ENCODE measurements at regions of chr1 and their contacts with region 1.

Region 1: DNA sequence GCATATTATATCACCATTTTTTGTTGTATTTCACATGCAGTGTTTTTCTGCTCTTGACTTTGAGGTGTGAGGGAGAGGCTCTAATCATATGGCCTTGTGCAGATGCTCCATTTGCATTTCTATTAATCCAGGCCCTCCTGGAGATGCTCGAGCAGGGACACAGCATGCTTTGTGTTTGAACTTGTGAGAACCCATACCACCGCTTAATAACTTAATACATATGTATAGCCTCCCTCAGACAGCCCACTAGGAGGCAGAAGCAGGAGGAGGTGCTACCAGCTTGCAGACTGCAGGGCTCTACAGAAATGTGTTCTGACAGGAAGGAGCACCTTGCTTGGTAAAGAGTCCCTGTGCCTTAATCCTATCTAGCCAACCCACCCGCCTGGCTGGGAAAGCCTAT is 155.2 kb downstream of the BARHL2 start:
- DNase-seq: peak; percentile 51
- ATAC-seq: peak; percentile 94
- H3K4me3 Mint-ChIP-seq: peak overlapping the region; percentile 10; the same call in 1 of the 2 replicates
- H3K27ac Mint-ChIP-seq: no peak overlapping the region
- H3K4me1 Mint-ChIP-seq: peaks cover 45% of the 10 kb centered on the region
- H3K27me3 Mint-ChIP-seq: peaks cover 92% of the 10 kb centered on the region
- CTCF ChIP-seq: no peak

Region 2: GRCh38 chr1:90092441-90092840 is 469.5 kb before region 1 on chr1:
- CTCF ChIA-PET with region 1: no interaction called
- POLR2A ChIA-PET with region 1: no interaction called
- DNase-seq: no peak
- ATAC-seq: no peak
- H3K4me3 Mint-ChIP-seq: no peak overlapping the region
- H3K27ac Mint-ChIP-seq: no peak overlapping the region
- H3K4me1 Mint-ChIP-seq: no peaks in the 10 kb centered on the region
- H3K27me3 Mint-ChIP-seq: no peaks in the 10 kb centered on the region
- CTCF ChIP-seq: no peak

Region 3: GRCh38 chr1:90550626-90551406 is 11.1 kb before region 1 on chr1:
- CTCF ChIA-PET with region 1: interaction called, 15 read pairs
- POLR2A ChIA-PET with region 1: no interaction called
- DNase-seq: peak; percentile 41
- ATAC-seq: peak; percentile 100
- H3K4me3 Mint-ChIP-seq: no peak overlapping the region
- H3K27ac Mint-ChIP-seq: no peak overlapping the region
- H3K4me1 Mint-ChIP-seq: peaks cover 16% of the 10 kb centered on the region
- H3K27me3 Mint-ChIP-seq: peaks cover 20% of the 10 kb centered on the region
- CTCF ChIP-seq: no peak

Region 4: GRCh38 chr1:90781534-90781933 is 219.6 kb after region 1 on chr1:
- CTCF ChIA-PET with region 1: no interaction called
- POLR2A ChIA-PET with region 1: no interaction called
- DNase-seq: no peak
- ATAC-seq: no peak
- H3K4me3 Mint-ChIP-seq: no peak overlapping the region
- H3K27ac Mint-ChIP-seq: no peak overlapping the region
- H3K4me1 Mint-ChIP-seq: peaks cover 19% of the 10 kb centered on the region
- H3K27me3 Mint-ChIP-seq: peaks cover 2% of the 10 kb centered on the region; the same call in 1 of the 2 replicates
- CTCF ChIP-seq: no peak